ENCODE measurements at regions of chr16 and their contacts with region 1.

Region 1: DNA sequence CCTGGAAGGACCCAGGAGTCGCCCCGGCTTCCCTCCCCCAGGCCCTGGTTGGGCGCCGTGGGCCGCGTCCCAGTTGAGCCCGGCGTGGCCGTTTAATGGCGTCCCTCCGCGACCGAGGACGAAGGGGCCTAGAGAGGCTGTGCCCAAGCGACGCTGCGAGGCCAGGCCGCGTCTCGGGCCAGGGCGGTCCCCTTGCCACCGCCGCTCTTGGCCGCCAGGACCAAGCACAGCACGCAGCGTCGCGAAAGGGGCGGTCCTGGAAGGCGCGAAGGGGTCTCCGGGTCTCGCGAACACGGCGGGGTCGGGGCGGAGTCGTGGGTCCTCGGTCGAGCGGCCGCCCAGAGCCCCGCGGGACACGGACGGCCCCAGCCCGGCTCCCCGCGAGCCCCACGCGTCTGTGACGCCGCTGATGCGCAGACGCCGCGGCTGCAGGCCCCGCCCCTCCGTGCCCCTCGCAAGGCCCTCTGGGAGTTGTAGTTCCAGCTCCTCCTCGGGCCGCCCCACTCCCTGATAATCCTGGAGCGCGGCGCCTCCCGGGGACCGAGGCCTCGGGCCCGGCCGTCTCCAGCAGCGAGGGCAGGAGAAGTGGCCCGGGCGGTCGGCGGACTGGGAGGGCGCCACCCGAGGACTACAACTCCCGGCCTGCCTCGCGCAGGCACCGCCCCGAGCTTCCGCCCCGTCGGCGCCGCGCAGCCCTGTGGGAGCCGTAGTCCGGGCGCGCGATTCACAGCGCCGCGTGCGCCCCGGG is at the start of gene CAPN15:
- DNase-seq: peak; percentile 84
- H3K4me3 Mint-ChIP-seq: peak within 1 kb of the TSS; percentile 87
- H3K27ac Mint-ChIP-seq: peak within 1 kb of the TSS; percentile 96
- H3K4me1 Mint-ChIP-seq: peaks cover 40% of the 10 kb centered on the region
- H3K27me3 Mint-ChIP-seq: no peaks in the 10 kb centered on the region
- total RNA-seq, gene CAPN15: 54.4 to 56.9 TPM

Region 2: GRCh38 chr16:303760-304505 is 223.2 kb before region 1 on chr16:
- CTCF ChIA-PET with region 1: no interaction called
- intact Hi-C with region 1: no loop called
- DNase-seq: peak; percentile 25
- H3K4me3 Mint-ChIP-seq: no peak overlapping the region
- H3K27ac Mint-ChIP-seq: no peak overlapping the region
- H3K4me1 Mint-ChIP-seq: peaks cover 4% of the 10 kb centered on the region
- H3K27me3 Mint-ChIP-seq: no peaks in the 10 kb centered on the region

Region 3: GRCh38 chr16:352547-353403 is 174.4 kb before region 1 on chr16 and contains the start of gene AXIN1:
- CTCF ChIA-PET with region 1: no interaction called
- intact Hi-C with region 1: loop called (anchors 1 kb)
- DNase-seq: peak; percentile 100
- H3K4me3 Mint-ChIP-seq: peak within 1 kb of the TSS; percentile 91
- H3K27ac Mint-ChIP-seq: peak within 1 kb of the TSS; percentile 82
- H3K4me1 Mint-ChIP-seq: peaks cover 48% of the 10 kb centered on the region
- H3K27me3 Mint-ChIP-seq: no peaks in the 10 kb centered on the region
- total RNA-seq, gene AXIN1: 17.5 to 17.9 TPM

Region 4: DNA sequence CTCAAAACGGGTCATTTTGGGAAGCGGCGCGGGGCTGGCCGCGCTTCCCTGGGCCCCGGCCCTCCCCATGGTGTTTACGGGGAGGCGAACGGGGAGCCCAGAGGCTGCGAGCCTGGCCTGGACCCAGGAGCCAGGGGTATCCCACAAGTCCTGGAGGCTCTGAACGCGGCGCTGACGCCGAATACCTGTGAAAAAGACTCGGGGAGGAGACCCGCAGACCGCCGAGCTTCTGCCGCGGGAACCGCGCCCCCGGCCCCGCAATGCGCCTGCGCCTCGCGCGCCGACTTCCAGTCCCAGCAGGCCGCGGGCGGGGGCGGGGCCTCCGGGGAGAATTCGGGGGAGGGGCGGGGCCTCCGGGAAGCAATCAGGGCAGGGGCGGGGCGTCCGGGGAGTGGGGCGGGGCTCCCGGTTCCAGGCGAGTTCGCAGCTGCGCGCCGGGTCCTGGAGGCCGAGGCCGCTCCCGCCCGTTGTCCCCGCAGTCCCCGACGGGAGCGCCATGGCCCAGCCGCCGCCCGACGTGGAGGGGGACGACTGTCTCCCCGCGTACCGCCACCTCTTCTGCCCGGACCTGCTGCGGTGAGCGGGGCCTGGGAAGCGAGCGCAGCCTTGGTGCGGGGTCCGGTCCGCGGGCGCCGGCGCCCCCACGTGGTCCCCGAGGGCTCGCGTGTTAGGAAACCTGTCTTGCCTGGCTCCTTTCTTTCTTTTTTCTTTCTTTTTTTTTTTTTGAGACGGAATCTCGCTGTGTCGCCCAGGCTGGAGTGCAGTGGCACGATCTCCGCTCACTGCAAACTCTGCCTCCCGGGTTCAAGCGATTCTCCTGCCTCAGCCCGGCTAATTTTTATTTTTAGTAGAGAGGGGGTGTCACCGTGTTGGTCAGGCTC is 125.5 kb before region 1 on chr16 and contains the start of gene DECR2:
- CTCF ChIA-PET with region 1: no interaction called
- intact Hi-C with region 1: loop called (anchors 1 kb)
- DNase-seq: peak; percentile 99
- H3K4me3 Mint-ChIP-seq: peak within 1 kb of the TSS; percentile 83
- H3K27ac Mint-ChIP-seq: peak within 1 kb of the TSS; percentile 83
- H3K4me1 Mint-ChIP-seq: peaks cover 17% of the 10 kb centered on the region
- H3K27me3 Mint-ChIP-seq: no peaks in the 10 kb centered on the region
- total RNA-seq, gene DECR2: 8.9 to 9.6 TPM

Region 5: GRCh38 chr16:569445-570254 is 42.5 kb after region 1 on chr16 and contains the start of gene PIGQ:
- CTCF ChIA-PET with region 1: no interaction called
- intact Hi-C with region 1: loop called (anchors 1 kb)
- DNase-seq: peak; percentile 67
- H3K4me3 Mint-ChIP-seq: peak within 1 kb of the TSS; percentile 86
- H3K27ac Mint-ChIP-seq: peak within 1 kb of the TSS; percentile 90
- H3K4me1 Mint-ChIP-seq: peaks cover 29% of the 10 kb centered on the region
- H3K27me3 Mint-ChIP-seq: no peaks in the 10 kb centered on the region
- total RNA-seq, gene PIGQ: 18.6 to 19.2 TPM

Region 6: GRCh38 chr16:636206-637080 is 109.3 kb after region 1 on chr16 and contains the start of gene METTL26:
- CTCF ChIA-PET with region 1: no interaction called
- intact Hi-C with region 1: loop called (anchors 1 kb)
- DNase-seq: peak; percentile 95
- H3K4me3 Mint-ChIP-seq: peak within 1 kb of the TSS; percentile 90
- H3K27ac Mint-ChIP-seq: peak within 1 kb of the TSS; percentile 91
- H3K4me1 Mint-ChIP-seq: peaks cover 15% of the 10 kb centered on the region
- H3K27me3 Mint-ChIP-seq: no peaks in the 10 kb centered on the region
- total RNA-seq, gene METTL26: 121 to 122 TPM

Region 7: DNA sequence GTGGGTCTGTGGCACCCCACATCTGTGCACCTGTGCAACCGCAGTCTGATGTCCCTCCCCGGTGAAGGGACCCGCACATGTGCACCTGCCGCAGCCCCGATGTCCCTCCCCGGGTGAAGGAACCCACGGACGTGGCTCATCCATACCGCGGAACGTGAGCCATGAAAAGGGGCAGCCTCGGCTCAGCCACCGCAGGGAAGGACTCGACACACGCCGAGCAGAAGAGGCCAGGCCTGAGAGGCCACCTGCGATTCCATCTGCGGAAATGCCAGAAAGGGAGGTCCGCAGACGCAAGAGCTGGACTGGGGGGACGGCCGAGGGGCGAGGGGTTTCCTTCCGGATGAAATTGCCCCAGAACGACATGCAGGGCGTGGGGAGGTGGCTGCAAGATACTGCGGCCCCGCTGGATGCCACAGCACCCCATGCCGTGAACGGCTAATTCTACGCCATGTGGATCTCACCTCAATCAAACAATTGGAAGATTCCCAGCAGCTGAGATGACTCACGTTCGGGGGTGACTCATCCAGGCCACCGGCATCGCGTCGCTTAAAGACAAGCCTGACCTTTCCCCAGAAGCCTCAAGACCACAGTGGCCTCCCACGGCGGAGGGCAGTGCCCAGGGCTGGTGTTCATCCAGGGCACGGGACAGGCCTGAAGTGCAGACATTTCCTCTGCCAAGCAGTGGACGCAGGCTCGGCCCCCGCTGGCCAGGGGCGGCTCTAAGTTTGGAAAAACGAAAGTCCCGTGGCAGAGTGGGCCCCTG is 475.4 kb after region 1 on chr16:
- CTCF ChIA-PET with region 1: no interaction called
- intact Hi-C with region 1: loop called (anchors 5 kb)
- DNase-seq: peak; percentile 94
- H3K4me3 Mint-ChIP-seq: no peak overlapping the region
- H3K27ac Mint-ChIP-seq: peak overlapping the region; percentile 72
- H3K4me1 Mint-ChIP-seq: peaks cover 63% of the 10 kb centered on the region
- H3K27me3 Mint-ChIP-seq: no peaks in the 10 kb centered on the region